ENCODE measurements at regions of chr6 and their contacts with region 1.

Region 1: GRCh38 chr6:35139908-35140655 is 1.1 kb downstream of the TCP11 start:
- DNase-seq: no peak
- H3K4me3 ChIP-seq: no peak overlapping the region
- H3K27me3 ChIP-seq: no peaks in the 10 kb centered on the region
- CTCF ChIP-seq: peak; percentile 74

Region 2: DNA sequence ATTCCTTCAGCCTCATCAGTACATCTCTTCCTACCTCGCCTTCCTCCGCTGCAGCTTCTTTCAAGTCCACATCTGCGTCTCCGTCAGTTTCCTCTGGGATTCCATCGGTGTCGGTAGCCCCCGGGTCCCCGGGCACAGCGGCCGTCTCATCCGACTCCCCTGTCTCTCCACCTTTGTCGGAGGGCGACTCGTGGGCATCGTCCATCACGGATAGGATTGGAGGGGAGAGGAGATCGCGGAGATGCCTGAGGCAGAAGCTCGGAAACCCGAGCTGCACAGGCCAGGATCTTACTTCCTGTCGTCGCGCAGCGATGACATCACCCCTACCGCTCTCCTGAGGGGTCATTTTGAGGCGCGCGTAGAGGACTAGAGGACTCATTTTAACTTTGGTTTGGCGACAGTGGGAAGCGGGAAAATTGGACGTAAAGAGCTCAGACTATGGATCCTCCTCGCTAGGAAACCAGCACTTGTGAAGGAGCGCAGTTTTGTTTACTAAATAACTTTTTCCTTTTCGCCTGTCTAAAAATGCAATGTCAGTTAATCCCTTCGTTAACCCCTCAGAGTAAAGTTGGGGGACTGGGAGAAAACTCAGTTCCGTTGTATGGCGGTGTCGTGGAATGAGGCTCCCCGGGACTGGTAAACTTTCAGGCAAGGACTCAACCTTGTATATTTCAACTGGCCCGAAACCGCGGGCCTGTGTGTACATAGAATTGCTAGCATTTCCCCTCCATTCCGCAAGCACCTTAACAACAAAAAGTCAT is 252.1 kb before region 1 on chr6 and contains the start of gene TAF11:
- CTCF ChIA-PET with region 1: interaction called, 11 read pairs
- POLR2A ChIA-PET with region 1: no interaction called
- DNase-seq: peak; percentile 66
- H3K4me3 ChIP-seq: peak within 1 kb of the TSS; percentile 65
- H3K27me3 ChIP-seq: no peaks in the 10 kb centered on the region
- CTCF ChIP-seq: no peak
- polyA plus RNA-seq, gene TAF11: 15.2 and 24.7 TPM in 2 replicates

Region 3: DNA sequence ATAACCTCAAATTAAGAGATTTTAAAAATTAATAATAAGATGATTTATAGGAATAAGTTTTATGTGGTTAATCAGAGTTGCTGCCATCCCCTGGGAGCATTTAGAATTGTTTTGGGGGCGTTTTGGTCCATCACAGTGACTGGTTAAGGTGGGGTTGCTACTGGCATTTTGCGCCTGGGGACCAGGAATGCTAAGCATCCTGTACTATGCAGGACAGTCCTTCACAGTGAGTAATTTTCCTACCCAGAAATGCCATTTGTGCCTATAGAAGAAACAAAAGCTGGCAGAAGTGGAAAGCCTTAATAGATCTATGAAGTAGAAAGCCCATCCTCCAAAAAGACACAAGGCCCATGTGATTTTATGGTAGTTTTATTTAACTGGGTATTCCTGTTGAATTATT is 133.1 kb before region 1 on chr6:
- CTCF ChIA-PET with region 1: interaction called, 10 read pairs
- POLR2A ChIA-PET with region 1: no interaction called
- DNase-seq: no peak
- H3K4me3 ChIP-seq: no peak overlapping the region
- H3K27me3 ChIP-seq: no peaks in the 10 kb centered on the region
- CTCF ChIP-seq: no peak

Region 4: DNA sequence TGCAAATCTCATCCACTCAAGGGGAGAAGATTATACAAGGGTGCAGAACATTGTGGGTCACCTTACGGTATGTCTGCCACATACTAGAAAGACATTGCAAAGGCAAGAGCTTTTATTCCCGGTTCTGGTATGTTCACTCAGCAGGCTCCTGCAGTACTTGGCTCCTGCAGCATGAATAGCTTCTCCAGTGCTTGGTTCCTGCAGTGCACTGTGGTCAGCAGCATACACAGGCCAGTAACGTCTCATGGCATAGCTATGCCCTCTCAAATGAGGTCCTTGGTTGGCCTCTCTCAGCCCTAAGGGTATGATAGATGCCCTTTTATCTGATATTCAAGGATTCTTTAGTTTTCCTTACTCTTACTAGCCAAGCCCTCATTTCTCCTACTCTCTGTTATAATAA is 11.6 kb before region 1 on chr6:
- CTCF ChIA-PET with region 1: interaction called, 18 read pairs
- POLR2A ChIA-PET with region 1: no interaction called
- DNase-seq: no peak
- H3K4me3 ChIP-seq: no peak overlapping the region
- H3K27me3 ChIP-seq: peaks cover 1% of the 10 kb centered on the region; the same call in 1 of the 2 replicates
- CTCF ChIP-seq: no peak